GM12878 (cell line): ENCODE measurements at regions of chr11 and their contacts with region 1.

Region 1: DNA sequence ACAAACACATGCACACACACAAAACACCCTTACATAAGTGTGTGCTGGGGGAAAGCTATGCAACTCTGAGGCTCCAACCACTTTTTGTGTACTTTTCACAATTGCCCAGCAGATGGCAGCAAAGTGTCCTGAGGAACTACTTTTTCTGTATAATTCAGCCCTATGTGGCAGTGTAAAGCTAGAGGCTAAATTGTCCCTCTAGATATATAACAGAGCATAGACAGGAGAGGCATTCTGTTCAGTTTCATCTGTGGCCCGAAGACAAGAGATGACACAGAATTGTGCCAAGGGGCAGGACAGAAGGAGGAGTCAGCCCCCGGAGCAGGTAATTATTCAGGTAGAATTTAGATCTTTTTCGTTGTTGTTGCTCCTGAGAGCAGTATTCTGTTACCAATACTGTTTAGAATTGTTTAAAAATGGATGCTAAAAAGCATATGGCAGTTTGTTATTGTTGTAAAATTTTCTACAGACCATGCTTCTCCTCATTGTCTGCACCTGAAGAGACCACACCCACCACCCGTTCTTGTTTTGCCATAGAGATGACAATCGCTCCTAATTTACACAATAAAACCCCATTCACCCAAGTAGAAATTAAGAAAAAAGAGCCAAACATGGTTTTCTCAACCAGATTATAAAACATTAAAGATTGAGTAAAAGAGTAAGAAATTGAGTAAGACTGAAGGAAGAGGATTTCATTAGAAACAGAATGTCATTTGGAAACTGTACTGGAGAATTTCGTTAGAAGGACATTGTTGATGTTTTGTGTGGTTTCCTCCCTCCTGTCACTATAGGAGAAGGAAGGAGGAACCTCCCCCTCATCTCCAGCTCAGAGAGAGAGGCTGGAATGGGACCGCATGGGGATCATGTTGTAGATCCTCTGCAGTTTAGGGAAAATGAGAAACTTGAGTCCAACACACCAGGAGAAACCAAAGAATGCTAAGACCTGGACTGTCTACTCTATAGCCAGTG is 14.5 kb upstream of the MS4A7 start:
- DNase-seq: peak; percentile 88
- ATAC-seq: peak; percentile 92
- H3K4me3 ChIP-seq: peak overlapping the region; percentile 52; the same call in 1 of the 2 replicates
- H3K27ac ChIP-seq: peak overlapping the region; percentile 36
- H3K4me1 ChIP-seq: peaks cover 14% of the 10 kb centered on the region; the same call in 1 of the 2 replicates
- H3K27me3 ChIP-seq: no peaks in the 10 kb centered on the region
- CTCF ChIP-seq: peak; percentile 63 to 92 (median 78); a peak in 5 of 6 replicates
- EP300 ChIP-seq: no peak
- POLR2A ChIP-seq: no peak
- RAD21 ChIP-seq: peak; percentile 95

Region 2: GRCh38 chr11:60334005-60334620 is 29.7 kb before region 1 on chr11:
- CTCF ChIA-PET with region 1: interaction called, 50 read pairs
- POLR2A ChIA-PET with region 1: no interaction called
- RAD21 ChIA-PET with region 1: interaction called, 3 read pairs
- SMC1A ChIA-PET with region 1: interaction called, 15 read pairs
- in situ Hi-C with region 1: no loop called
- intact Hi-C with region 1: no loop called
- DNase-seq: no peak
- ATAC-seq: peak; percentile 65
- H3K4me3 ChIP-seq: no peak overlapping the region
- H3K27ac ChIP-seq: no peak overlapping the region
- H3K4me1 ChIP-seq: peaks cover 22% of the 10 kb centered on the region
- H3K27me3 ChIP-seq: no peaks in the 10 kb centered on the region
- CTCF ChIP-seq: peak; percentile 73 to 86 (median 74)
- EP300 ChIP-seq: no peak
- POLR2A ChIP-seq: no peak
- RAD21 ChIP-seq: peak; percentile 67

Region 3: GRCh38 chr11:60396799-60397198 is 33.0 kb after region 1 on chr11:
- CTCF ChIA-PET with region 1: interaction called, 16 read pairs
- POLR2A ChIA-PET with region 1: interaction called, 3 read pairs
- RAD21 ChIA-PET with region 1: interaction called, 3 read pairs
- SMC1A ChIA-PET with region 1: interaction called, 6 read pairs
- in situ Hi-C with region 1: no loop called
- intact Hi-C with region 1: no loop called
- DNase-seq: peak; percentile 47
- ATAC-seq: peak; percentile 84
- H3K4me3 ChIP-seq: no peak overlapping the region
- H3K27ac ChIP-seq: peak overlapping the region; percentile 53
- H3K4me1 ChIP-seq: peaks cover 16% of the 10 kb centered on the region
- H3K27me3 ChIP-seq: no peaks in the 10 kb centered on the region
- CTCF ChIP-seq: no peak
- EP300 ChIP-seq: no peak
- POLR2A ChIP-seq: no peak
- RAD21 ChIP-seq: no peak

Region 4: GRCh38 chr11:60477035-60477445 is 113.2 kb after region 1 on chr11:
- CTCF ChIA-PET with region 1: interaction called, 146 read pairs
- POLR2A ChIA-PET with region 1: interaction called, 3 read pairs
- RAD21 ChIA-PET with region 1: interaction called, 97 read pairs
- SMC1A ChIA-PET with region 1: interaction called, 123 read pairs
- in situ Hi-C with region 1: loop called (anchors 5 kb)
- intact Hi-C with region 1: loop called (anchors 1 kb)
- DNase-seq: no peak
- ATAC-seq: peak; percentile 97
- H3K4me3 ChIP-seq: no peak overlapping the region
- H3K27ac ChIP-seq: peak overlapping the region; percentile 12; the same call in 1 of the 2 replicates
- H3K4me1 ChIP-seq: peaks cover 15% of the 10 kb centered on the region
- H3K27me3 ChIP-seq: no peaks in the 10 kb centered on the region
- CTCF ChIP-seq: no peak
- EP300 ChIP-seq: peak; percentile 60 to 63; a peak in 3 of 4 replicates
- POLR2A ChIP-seq: no peak
- RAD21 ChIP-seq: no peak

Region 5: GRCh38 chr11:60615497-60615896 is 251.7 kb after region 1 on chr11:
- CTCF ChIA-PET with region 1: interaction called, 61 read pairs
- POLR2A ChIA-PET with region 1: no interaction called
- RAD21 ChIA-PET with region 1: interaction called, 41 read pairs
- SMC1A ChIA-PET with region 1: interaction called, 38 read pairs
- in situ Hi-C with region 1: loop called (anchors 10 kb)
- intact Hi-C with region 1: loop called (anchors 1 kb)
- DNase-seq: no peak
- ATAC-seq: no peak
- H3K4me3 ChIP-seq: no peak overlapping the region
- H3K27ac ChIP-seq: no peak overlapping the region
- H3K4me1 ChIP-seq: no peaks in the 10 kb centered on the region
- H3K27me3 ChIP-seq: no peaks in the 10 kb centered on the region
- CTCF ChIP-seq: no peak
- EP300 ChIP-seq: no peak
- POLR2A ChIP-seq: no peak
- RAD21 ChIP-seq: no peak